Naive thymus-derived CD4-positive, alpha-beta T cell (primary cell): ENCODE measurements at regions of chr12 and their contacts with region 1.

Region 1: DNA sequence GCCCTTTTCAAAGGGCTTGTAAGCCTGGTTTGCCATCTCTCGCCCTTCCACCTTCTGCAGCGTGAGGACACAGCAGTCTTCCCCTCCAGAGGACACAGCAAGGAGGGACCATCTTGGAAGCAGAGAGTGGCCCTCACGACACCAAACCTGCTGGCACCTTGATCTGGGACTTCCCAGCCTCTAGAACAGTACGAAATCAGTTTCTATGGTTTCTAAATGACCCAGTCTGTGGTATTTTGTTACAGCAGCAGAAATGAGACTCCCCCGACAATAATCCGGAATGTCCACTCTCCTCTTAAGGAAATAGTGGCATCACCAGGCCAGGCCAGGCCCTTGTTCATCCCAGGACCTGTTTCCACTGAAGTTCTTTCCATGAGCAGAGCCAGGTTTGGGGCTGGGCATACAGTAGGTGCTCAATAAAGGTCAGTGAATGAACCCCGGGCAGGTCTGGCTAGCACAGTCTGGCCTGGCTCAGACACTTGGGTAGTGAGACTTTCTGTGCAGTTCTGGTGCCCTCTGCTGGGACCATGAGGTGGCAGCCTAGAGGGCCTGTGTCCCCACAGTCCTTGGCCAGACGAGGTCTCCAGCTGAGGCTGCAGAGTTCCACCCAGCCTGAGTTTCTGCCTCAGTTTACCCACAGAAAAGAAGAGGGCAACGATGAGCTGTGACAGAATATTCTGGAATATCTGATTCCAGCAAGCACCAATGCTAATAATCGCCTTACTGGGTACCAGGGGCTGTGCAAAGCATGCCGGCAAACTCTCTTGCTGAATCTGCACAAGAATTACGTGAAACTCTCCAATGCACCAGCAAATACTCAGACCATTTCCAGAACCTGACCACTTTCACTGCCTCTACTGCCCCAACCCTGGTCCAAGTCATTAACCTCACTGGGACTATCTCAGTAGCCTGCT is 14.0 kb downstream of the ABCB9 start:
- DNase-seq: peak; percentile 53 to 73 (median 68)
- ATAC-seq: peak; percentile 94
- H3K4me3 ChIP-seq: no peak overlapping the region
- H3K4me3 Mint-ChIP-seq: no peak overlapping the region
- H3K27ac ChIP-seq: no peak overlapping the region
- H3K27ac Mint-ChIP-seq: peak overlapping the region in 4 of 9 donors; percentile 22 to 51 (median 35)
- H3K4me1 ChIP-seq: peaks cover 0 to under 1% of the 10 kb centered on the region in 2 donors
- H3K4me1 Mint-ChIP-seq: peaks cover 0 to 15% (median 5%) of the 10 kb centered on the region in 7 donors
- H3K27me3 ChIP-seq: no peaks in the 10 kb centered on the region
- H3K27me3 Mint-ChIP-seq: no peaks in the 10 kb centered on the region

Region 2: DNA sequence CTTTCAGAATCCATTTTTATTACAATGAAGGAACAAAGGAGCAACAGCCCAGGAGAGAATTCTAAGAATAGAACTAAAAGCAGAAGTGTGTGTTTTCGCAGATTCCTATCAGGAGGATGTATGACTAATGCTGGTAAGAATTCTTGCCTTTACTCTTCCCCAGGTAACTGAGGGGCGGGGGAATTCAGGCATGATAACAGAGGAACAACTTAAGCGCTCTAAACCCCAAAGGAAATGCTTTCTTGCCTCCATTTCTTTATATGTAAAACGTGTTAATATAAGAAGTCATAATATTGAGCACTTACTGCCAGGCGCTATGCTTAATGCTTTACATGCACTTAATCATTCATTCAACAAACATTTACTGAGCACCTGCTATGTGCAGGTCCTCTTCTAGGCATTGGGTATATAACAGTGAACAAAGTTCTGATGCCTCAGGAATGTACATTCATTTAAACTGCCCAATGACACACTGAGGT is 226.1 kb before region 1 on chr12:
- CTCF ChIA-PET with region 1: no interaction called
- POLR2A ChIA-PET with region 1: no interaction called
- intact Hi-C with region 1: no loop called
- DNase-seq: peak in 1 of 9 donors; percentile 47
- ATAC-seq: peak; percentile 69
- H3K4me3 ChIP-seq: no peak overlapping the region
- H3K4me3 Mint-ChIP-seq: peak overlapping the region in 1 of 10 donors; percentile 57
- H3K27ac ChIP-seq: no peak overlapping the region
- H3K27ac Mint-ChIP-seq: peak overlapping the region in 4 of 9 donors; percentile 17 to 62 (median 38)
- H3K4me1 ChIP-seq: peaks cover 0 to 14% of the 10 kb centered on the region in 2 donors
- H3K4me1 Mint-ChIP-seq: peaks cover 0 to 70% (median 27%) of the 10 kb centered on the region in 7 donors
- H3K27me3 ChIP-seq: no peaks in the 10 kb centered on the region
- H3K27me3 Mint-ChIP-seq: no peaks in the 10 kb centered on the region

Region 3: GRCh38 chr12:122793685-122794106 is 158.5 kb before region 1 on chr12:
- CTCF ChIA-PET with region 1: interaction called, 26 read pairs
- POLR2A ChIA-PET with region 1: no interaction called
- intact Hi-C with region 1: loop called (anchors 1 kb)
- DNase-seq: peak in 7 of 9 donors; percentile 35 to 72 (median 62)
- ATAC-seq: peak; percentile 82
- H3K4me3 ChIP-seq: no peak overlapping the region
- H3K4me3 Mint-ChIP-seq: no peak overlapping the region
- H3K27ac ChIP-seq: no peak overlapping the region
- H3K27ac Mint-ChIP-seq: no peak overlapping the region
- H3K4me1 ChIP-seq: no peaks in the 10 kb centered on the region
- H3K4me1 Mint-ChIP-seq: peaks cover 0 to 3% (median 0%) of the 10 kb centered on the region in 7 donors
- H3K27me3 ChIP-seq: no peaks in the 10 kb centered on the region
- H3K27me3 Mint-ChIP-seq: no peaks in the 10 kb centered on the region

Region 4: GRCh38 chr12:122813310-122813713 is 138.9 kb before region 1 on chr12:
- CTCF ChIA-PET with region 1: no interaction called
- POLR2A ChIA-PET with region 1: no interaction called
- intact Hi-C with region 1: no loop called
- DNase-seq: no peak
- ATAC-seq: peak; percentile 45
- H3K4me3 ChIP-seq: no peak overlapping the region
- H3K4me3 Mint-ChIP-seq: no peak overlapping the region
- H3K27ac ChIP-seq: no peak overlapping the region
- H3K27ac Mint-ChIP-seq: peak overlapping the region in 1 of 9 donors; percentile 72
- H3K4me1 ChIP-seq: no peaks in the 10 kb centered on the region
- H3K4me1 Mint-ChIP-seq: no peaks in the 10 kb centered on the region
- H3K27me3 ChIP-seq: no peaks in the 10 kb centered on the region
- H3K27me3 Mint-ChIP-seq: peaks cover 0 to 2% (median 0%) of the 10 kb centered on the region in 5 donors

Region 5: GRCh38 chr12:122880668-122881067 is 71.6 kb before region 1 on chr12:
- CTCF ChIA-PET with region 1: interaction called, 11 read pairs
- POLR2A ChIA-PET with region 1: no interaction called
- intact Hi-C with region 1: no loop called
- DNase-seq: peak in 1 of 9 donors; percentile 20
- ATAC-seq: peak; percentile 68
- H3K4me3 ChIP-seq: no peak overlapping the region
- H3K4me3 Mint-ChIP-seq: peak overlapping the region in 4 of 10 donors; percentile 2 to 52 (median 36)
- H3K27ac ChIP-seq: peak overlapping the region; percentile 9
- H3K27ac Mint-ChIP-seq: peak overlapping the region in 8 of 9 donors; percentile 49 to 83 (median 67)
- H3K4me1 ChIP-seq: peaks cover 48 to 49% of the 10 kb centered on the region in 2 donors
- H3K4me1 Mint-ChIP-seq: peaks cover 63 to 97% (median 91%) of the 10 kb centered on the region in 7 donors
- H3K27me3 ChIP-seq: no peaks in the 10 kb centered on the region
- H3K27me3 Mint-ChIP-seq: peaks cover 0 to 26% (median 0%) of the 10 kb centered on the region in 5 donors

Region 6: GRCh38 chr12:122975790-122976647 is 23.8 kb after region 1 on chr12:
- CTCF ChIA-PET with region 1: no interaction called
- POLR2A ChIA-PET with region 1: no interaction called
- intact Hi-C with region 1: no loop called
- DNase-seq: peak in 1 of 9 donors; percentile 7
- ATAC-seq: no peak
- H3K4me3 ChIP-seq: peak overlapping the region; percentile 100
- H3K4me3 Mint-ChIP-seq: peak overlapping the region; percentile 92 to 99 (median 97)
- H3K27ac ChIP-seq: peak overlapping the region; percentile 98
- H3K27ac Mint-ChIP-seq: peak overlapping the region; percentile 99 to 100 (median 99)
- H3K4me1 ChIP-seq: peaks cover 23 to 28% of the 10 kb centered on the region in 2 donors
- H3K4me1 Mint-ChIP-seq: peaks cover 19 to 46% (median 31%) of the 10 kb centered on the region in 7 donors
- H3K27me3 ChIP-seq: no peaks in the 10 kb centered on the region
- H3K27me3 Mint-ChIP-seq: peaks cover 0 to 3% (median 0%) of the 10 kb centered on the region in 5 donors